ENCODE measurements at regions of chr19 and their contacts with region 1.

Region 1: GRCh38 chr19:54023191-54023590 is 31.8 kb downstream of the CACNG6 start:
- DNase-seq: peak in 1 of 2 experiments; percentile 45
- ATAC-seq: no peak
- H3K4me3 ChIP-seq: no peak overlapping the region
- H3K27ac ChIP-seq: peak overlapping the region; percentile 85 to 92
- H3K4me1 ChIP-seq: peaks cover 40% of the 10 kb centered on the region
- CTCF ChIP-seq: no peak
- EP300 ChIP-seq: no peak
- POLR2A ChIP-seq: no peak
- RAD21 ChIP-seq: no peak

Region 2: GRCh38 chr19:53792721-53793433 is 230.3 kb before region 1 on chr19:
- CTCF ChIA-PET with region 1: interaction called, 22 read pairs
- POLR2A ChIA-PET with region 1: no interaction called
- DNase-seq: peak; percentile 73 to 92
- ATAC-seq: peak; percentile 97 to 99
- H3K4me3 ChIP-seq: no peak overlapping the region
- H3K27ac ChIP-seq: no peak overlapping the region
- H3K4me1 ChIP-seq: no peaks in the 10 kb centered on the region
- CTCF ChIP-seq: peak; percentile 98
- EP300 ChIP-seq: no peak
- POLR2A ChIP-seq: no peak
- RAD21 ChIP-seq: peak; percentile 84 to 95

Region 3: GRCh38 chr19:53879140-53880081 is 143.8 kb before region 1 on chr19:
- CTCF ChIA-PET with region 1: interaction called, 88 read pairs
- POLR2A ChIA-PET with region 1: no interaction called
- DNase-seq: peak; percentile 92 to 93
- ATAC-seq: peak; percentile 64 to 78
- H3K4me3 ChIP-seq: peak overlapping the region; percentile 44
- H3K27ac ChIP-seq: peak overlapping the region; percentile 72 to 89
- H3K4me1 ChIP-seq: peaks cover 21% of the 10 kb centered on the region
- CTCF ChIP-seq: no peak
- EP300 ChIP-seq: no peak
- POLR2A ChIP-seq: no peak
- RAD21 ChIP-seq: no peak

Region 4: DNA sequence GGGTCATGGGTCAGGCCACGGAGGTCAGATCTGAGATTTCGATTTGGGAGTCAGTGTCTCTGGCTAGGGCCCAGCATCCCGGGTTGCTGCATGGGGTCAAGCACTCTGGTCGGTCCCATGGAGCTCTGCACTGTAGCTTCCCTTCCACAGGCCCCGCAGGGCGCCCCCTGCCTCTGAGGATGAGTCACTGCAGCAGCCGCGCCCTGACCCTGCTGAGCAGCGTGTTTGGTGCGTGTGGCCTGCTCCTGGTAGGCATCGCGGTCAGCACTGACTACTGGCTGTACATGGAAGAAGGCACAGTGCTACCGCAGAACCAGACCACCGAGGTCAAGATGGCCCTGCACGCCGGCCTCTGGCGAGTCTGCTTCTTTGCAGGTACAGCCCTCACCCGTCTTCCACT is 110.5 kb before region 1 on chr19:
- CTCF ChIA-PET with region 1: interaction called, 63 read pairs
- POLR2A ChIA-PET with region 1: no interaction called
- DNase-seq: peak in 1 of 2 experiments; percentile 56
- ATAC-seq: peak in 1 of 2 experiments; percentile 10; a peak in 2 of 6 replicates
- H3K4me3 ChIP-seq: no peak overlapping the region
- H3K27ac ChIP-seq: no peak overlapping the region
- H3K4me1 ChIP-seq: peaks cover 20% of the 10 kb centered on the region
- CTCF ChIP-seq: peak; percentile 24; the same call in 2 of the 3 replicates
- EP300 ChIP-seq: no peak
- POLR2A ChIP-seq: no peak
- RAD21 ChIP-seq: peak in 1 of 2 experiments; percentile 15; a peak in 1 of 5 replicates

Region 5: GRCh38 chr19:53965091-53965739 is 58.0 kb before region 1 on chr19:
- CTCF ChIA-PET with region 1: interaction called, 15 read pairs
- POLR2A ChIA-PET with region 1: no interaction called
- DNase-seq: no peak
- ATAC-seq: no peak
- H3K4me3 ChIP-seq: no peak overlapping the region
- H3K27ac ChIP-seq: no peak overlapping the region
- H3K4me1 ChIP-seq: peaks cover 6% of the 10 kb centered on the region; the same call in 1 of the 3 replicates
- CTCF ChIP-seq: no peak
- EP300 ChIP-seq: no peak
- POLR2A ChIP-seq: no peak
- RAD21 ChIP-seq: no peak

Region 6: GRCh38 chr19:53991224-53992113 is 31.7 kb before region 1 on chr19 and contains the start of gene CACNG6:
- CTCF ChIA-PET with region 1: interaction called, 45 read pairs
- POLR2A ChIA-PET with region 1: interaction called, 6 read pairs
- DNase-seq: peak; percentile 86 to 93
- ATAC-seq: peak; percentile 53 to 62
- H3K4me3 ChIP-seq: peak within 1 kb of the TSS; percentile 51
- H3K27ac ChIP-seq: peak within 1 kb of the TSS; percentile 93 to 97
- H3K4me1 ChIP-seq: peaks cover 66% of the 10 kb centered on the region
- CTCF ChIP-seq: no peak
- EP300 ChIP-seq: no peak
- POLR2A ChIP-seq: peak; percentile 20; the same call in 1 of the 2 replicates
- RAD21 ChIP-seq: peak; percentile 36 to 47; a peak in 4 of 5 replicates
- polyA plus RNA-seq, gene CACNG6: 15.6 and 16.2 TPM in 2 replicates

Region 7: DNA sequence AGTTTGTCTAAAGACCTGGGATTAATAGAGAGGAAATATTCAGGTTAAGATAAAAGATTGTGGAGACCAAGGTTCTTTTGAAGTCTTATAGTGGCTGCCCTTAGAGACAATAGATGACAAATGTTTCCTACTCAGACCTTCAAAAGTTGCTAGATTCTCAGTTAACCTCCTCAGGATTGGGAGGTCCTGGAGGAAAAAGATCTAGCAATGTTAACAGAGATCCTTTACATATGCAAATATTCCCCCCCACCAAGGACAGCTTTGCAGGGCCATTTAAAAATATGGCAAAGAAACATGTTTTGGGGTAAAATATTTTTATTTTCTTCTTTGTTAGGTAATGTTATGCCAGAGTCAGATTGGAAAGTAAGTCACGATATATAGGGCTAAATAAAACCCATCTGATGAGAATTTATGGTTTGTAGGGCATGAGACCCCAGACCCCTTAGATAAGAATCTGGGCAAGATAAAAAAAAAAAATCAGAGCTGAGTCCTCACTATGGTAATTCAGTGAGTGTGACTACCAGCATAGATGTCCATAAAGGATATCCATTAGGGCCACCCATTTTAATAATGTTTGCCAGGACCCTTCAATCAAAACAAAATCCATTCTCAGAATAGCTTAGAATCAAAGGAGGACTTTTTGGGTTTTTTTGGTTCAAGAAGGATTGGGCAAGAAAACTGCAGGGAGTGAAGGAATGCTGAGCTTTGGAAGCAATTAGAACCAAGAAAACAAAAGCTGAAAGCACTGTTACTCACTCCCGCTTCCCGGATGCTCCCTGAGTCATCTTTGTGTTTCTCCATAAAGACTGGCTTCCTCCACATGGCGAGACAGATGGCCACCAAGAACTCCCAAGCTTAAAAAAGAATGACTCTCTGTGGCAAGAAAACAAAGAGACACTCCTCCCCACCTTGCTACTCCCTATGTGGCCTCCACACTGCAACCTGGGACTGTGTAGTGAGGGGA is 12.3 kb after region 1 on chr19:
- CTCF ChIA-PET with region 1: interaction called, 69 read pairs
- POLR2A ChIA-PET with region 1: no interaction called
- DNase-seq: peak in 1 of 2 experiments; percentile 52
- ATAC-seq: peak; percentile 65 to 88
- H3K4me3 ChIP-seq: no peak overlapping the region
- H3K27ac ChIP-seq: peak overlapping the region; percentile 36 to 59; a peak in 5 of 6 replicates
- H3K4me1 ChIP-seq: peaks cover 9% of the 10 kb centered on the region
- CTCF ChIP-seq: no peak
- EP300 ChIP-seq: no peak
- POLR2A ChIP-seq: no peak
- RAD21 ChIP-seq: no peak

Region 8: GRCh38 chr19:54107951-54108381 is 84.8 kb after region 1 on chr19:
- CTCF ChIA-PET with region 1: no interaction called
- POLR2A ChIA-PET with region 1: no interaction called
- DNase-seq: no peak
- ATAC-seq: no peak
- H3K4me3 ChIP-seq: no peak overlapping the region
- H3K27ac ChIP-seq: no peak overlapping the region
- H3K4me1 ChIP-seq: 0 out of 3 replicates have a peak, but pooled peaks cover 8% of the 10 kb centered on the region
- CTCF ChIP-seq: no peak
- EP300 ChIP-seq: no peak
- POLR2A ChIP-seq: no peak
- RAD21 ChIP-seq: no peak

Region 9: GRCh38 chr19:54218960-54219661 is 195.9 kb after region 1 on chr19:
- CTCF ChIA-PET with region 1: no interaction called
- POLR2A ChIA-PET with region 1: no interaction called
- DNase-seq: peak in 1 of 2 experiments; percentile 30
- ATAC-seq: no peak
- H3K4me3 ChIP-seq: no peak overlapping the region
- H3K27ac ChIP-seq: no peak overlapping the region
- H3K4me1 ChIP-seq: no peaks in the 10 kb centered on the region; the same call in 2 of the 3 replicates
- CTCF ChIP-seq: no peak
- EP300 ChIP-seq: no peak
- POLR2A ChIP-seq: no peak
- RAD21 ChIP-seq: no peak